CD4-positive, alpha-beta memory T cell (primary cell): ENCODE measurements at regions of chr21 and their contacts with region 1.

Region 1: DNA sequence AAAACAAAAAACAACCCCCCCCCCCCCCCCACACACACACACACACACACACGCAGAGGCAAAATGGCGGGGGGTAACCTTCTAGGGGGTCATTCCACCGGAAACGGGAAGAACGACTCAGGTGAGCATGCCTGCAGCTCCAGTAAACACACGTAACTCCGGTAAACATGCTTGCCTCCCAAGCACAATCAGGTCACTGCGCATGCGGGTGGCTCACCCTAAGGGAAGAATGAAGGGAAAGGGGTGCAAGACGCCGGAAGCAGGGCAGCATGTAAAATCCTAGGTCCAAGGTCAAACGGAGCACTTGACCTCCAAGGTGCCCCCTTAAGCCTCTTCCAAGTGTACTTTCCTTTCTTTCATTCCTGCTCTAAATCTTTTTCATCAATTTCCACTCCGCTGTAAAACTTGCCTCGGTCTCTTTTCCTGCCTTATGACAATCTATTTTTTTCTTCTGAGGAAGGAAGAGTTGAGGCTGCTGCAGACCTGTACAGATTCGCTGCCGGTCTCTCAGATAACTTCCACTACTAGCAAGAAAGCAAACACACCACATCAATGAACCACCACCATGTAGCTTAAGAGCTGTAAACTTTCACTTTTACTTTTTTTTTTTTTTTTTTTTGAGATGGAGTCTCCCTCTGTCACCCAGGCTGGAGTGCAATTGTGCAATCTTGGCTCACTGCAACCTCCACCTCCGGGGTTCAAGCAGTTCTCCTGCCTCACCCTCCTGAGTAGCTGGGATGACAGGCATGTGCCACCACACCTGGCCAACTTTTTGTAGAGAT is 21.0 kb upstream of the CBR3 start:
- DNase-seq: peak in 4 of 5 donors; percentile 56 to 85 (median 68)
- H3K4me3 ChIP-seq: peak overlapping the region; percentile 63 to 80
- H3K4me3 Mint-ChIP-seq: peak overlapping the region; percentile 81 to 98 (median 92)
- H3K27ac ChIP-seq: peak overlapping the region; percentile 49
- H3K27ac Mint-ChIP-seq: peak overlapping the region; percentile 45 to 97 (median 90)
- H3K4me1 ChIP-seq: peaks cover 29% of the 10 kb centered on the region
- H3K4me1 Mint-ChIP-seq: peaks cover 17 to 33% (median 21%) of the 10 kb centered on the region in 4 donors
- H3K27me3 ChIP-seq: no peaks in the 10 kb centered on the region
- H3K27me3 Mint-ChIP-seq: peaks cover 2% of the 10 kb centered on the region in 2 donors

Region 2: DNA sequence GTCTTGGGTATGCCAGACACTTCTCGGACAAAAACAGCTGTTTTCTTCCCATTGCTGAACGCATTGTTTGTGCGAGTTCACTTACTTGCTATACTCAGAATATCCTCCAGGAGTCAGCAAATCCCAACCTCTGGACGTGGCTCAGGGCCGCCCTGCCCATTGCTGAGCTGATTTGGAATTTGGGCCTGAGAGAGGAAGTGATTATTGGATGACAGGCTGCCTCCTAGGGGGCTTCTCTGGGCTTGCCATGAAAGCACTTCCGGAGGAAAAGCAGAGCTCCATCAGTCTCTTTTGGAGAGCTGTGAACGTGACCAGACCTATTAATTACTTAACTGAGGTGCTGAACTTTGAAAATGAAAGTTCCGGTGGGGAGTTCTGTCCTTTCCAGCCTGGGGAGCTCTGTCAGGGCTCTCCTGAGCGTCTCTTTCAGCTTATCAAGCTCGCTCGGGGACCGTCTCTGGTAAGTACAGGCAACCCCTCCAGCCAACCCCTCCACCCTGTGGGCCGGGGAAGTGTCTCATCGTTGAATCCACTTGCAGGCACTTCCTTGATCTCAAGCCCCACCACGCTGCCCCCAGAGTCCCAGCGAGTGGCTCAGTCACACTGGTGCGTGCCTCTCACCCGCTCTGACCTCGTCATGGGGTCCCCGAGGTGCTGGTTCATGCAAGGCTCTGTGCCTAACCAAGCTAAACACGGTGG is 1368.1 kb before region 1 on chr21:
- CTCF ChIA-PET with region 1: interaction called, 13 read pairs
- POLR2A ChIA-PET with region 1: no interaction called
- intact Hi-C with region 1: loop called (anchors 2 kb)
- DNase-seq: peak; percentile 43 to 63 (median 53)
- H3K4me3 ChIP-seq: no peak overlapping the region
- H3K4me3 Mint-ChIP-seq: peak overlapping the region in 3 of 8 donors; percentile 17 to 55 (median 50)
- H3K27ac ChIP-seq: no peak overlapping the region
- H3K27ac Mint-ChIP-seq: no peak overlapping the region
- H3K4me1 ChIP-seq: peaks cover 8% of the 10 kb centered on the region
- H3K4me1 Mint-ChIP-seq: peaks cover 0 to 4% (median 2%) of the 10 kb centered on the region in 4 donors
- H3K27me3 ChIP-seq: no peaks in the 10 kb centered on the region
- H3K27me3 Mint-ChIP-seq: peaks cover 7 to 8% of the 10 kb centered on the region in 2 donors

Region 3: GRCh38 chr21:35768187-35768586 is 345.7 kb before region 1 on chr21:
- CTCF ChIA-PET with region 1: no interaction called
- POLR2A ChIA-PET with region 1: no interaction called
- intact Hi-C with region 1: no loop called
- DNase-seq: no peak
- H3K4me3 ChIP-seq: no peak overlapping the region
- H3K4me3 Mint-ChIP-seq: no peak overlapping the region
- H3K27ac ChIP-seq: no peak overlapping the region
- H3K27ac Mint-ChIP-seq: no peak overlapping the region
- H3K4me1 ChIP-seq: no peaks in the 10 kb centered on the region
- H3K4me1 Mint-ChIP-seq: no peaks in the 10 kb centered on the region
- H3K27me3 ChIP-seq: no peaks in the 10 kb centered on the region
- H3K27me3 Mint-ChIP-seq: peaks cover 5 to 8% of the 10 kb centered on the region in 2 donors

Region 4: GRCh38 chr21:35840197-35840799 is 273.5 kb before region 1 on chr21:
- CTCF ChIA-PET with region 1: no interaction called
- POLR2A ChIA-PET with region 1: no interaction called
- intact Hi-C with region 1: loop called (anchors 5 kb)
- DNase-seq: peak; percentile 43 to 53 (median 44)
- H3K4me3 ChIP-seq: no peak overlapping the region
- H3K4me3 Mint-ChIP-seq: no peak overlapping the region
- H3K27ac ChIP-seq: no peak overlapping the region
- H3K27ac Mint-ChIP-seq: no peak overlapping the region
- H3K4me1 ChIP-seq: no peaks in the 10 kb centered on the region
- H3K4me1 Mint-ChIP-seq: no peaks in the 10 kb centered on the region
- H3K27me3 ChIP-seq: no peaks in the 10 kb centered on the region
- H3K27me3 Mint-ChIP-seq: peaks cover 0 to 6% of the 10 kb centered on the region in 2 donors

Region 5: GRCh38 chr21:35932232-35932911 is 181.5 kb before region 1 on chr21:
- CTCF ChIA-PET with region 1: no interaction called
- POLR2A ChIA-PET with region 1: no interaction called
- intact Hi-C with region 1: no loop called
- DNase-seq: peak in 1 of 5 donors; percentile 5
- H3K4me3 ChIP-seq: no peak overlapping the region
- H3K4me3 Mint-ChIP-seq: no peak overlapping the region
- H3K27ac ChIP-seq: no peak overlapping the region
- H3K27ac Mint-ChIP-seq: no peak overlapping the region
- H3K4me1 ChIP-seq: no peaks in the 10 kb centered on the region
- H3K4me1 Mint-ChIP-seq: no peaks in the 10 kb centered on the region
- H3K27me3 ChIP-seq: no peaks in the 10 kb centered on the region
- H3K27me3 Mint-ChIP-seq: peaks cover 2% of the 10 kb centered on the region in 2 donors

Region 6: GRCh38 chr21:36060159-36060921 is 53.5 kb before region 1 on chr21 and contains the start of gene SETD4:
- CTCF ChIA-PET with region 1: interaction called, 10 read pairs
- POLR2A ChIA-PET with region 1: interaction called, 29 read pairs
- intact Hi-C with region 1: loop called (anchors 1 kb)
- DNase-seq: peak; percentile 91 to 95 (median 93)
- H3K4me3 ChIP-seq: peak within 1 kb of the TSS; percentile 94 to 98
- H3K4me3 Mint-ChIP-seq: peak within 1 kb of the TSS; percentile 93 to 99 (median 96)
- H3K27ac ChIP-seq: peak within 1 kb of the TSS; percentile 83
- H3K27ac Mint-ChIP-seq: peak within 1 kb of the TSS; percentile 98 to 99 (median 98)
- H3K4me1 ChIP-seq: peaks cover 13% of the 10 kb centered on the region
- H3K4me1 Mint-ChIP-seq: peaks cover 6 to 34% (median 14%) of the 10 kb centered on the region in 4 donors
- H3K27me3 ChIP-seq: no peaks in the 10 kb centered on the region
- H3K27me3 Mint-ChIP-seq: no peaks in the 10 kb centered on the region
- total RNA-seq, gene SETD4: 30.3 to 31.0 TPM

Region 7: GRCh38 chr21:36125512-36126222 is 11.8 kb after region 1 on chr21:
- CTCF ChIA-PET with region 1: interaction called, 27 read pairs
- POLR2A ChIA-PET with region 1: interaction called, 12 read pairs
- intact Hi-C with region 1: no loop called
- DNase-seq: peak; percentile 40 to 57 (median 46)
- H3K4me3 ChIP-seq: no peak overlapping the region
- H3K4me3 Mint-ChIP-seq: no peak overlapping the region
- H3K27ac ChIP-seq: no peak overlapping the region
- H3K27ac Mint-ChIP-seq: no peak overlapping the region
- H3K4me1 ChIP-seq: peaks cover 3% of the 10 kb centered on the region
- H3K4me1 Mint-ChIP-seq: peaks cover 13 to 24% (median 19%) of the 10 kb centered on the region in 4 donors
- H3K27me3 ChIP-seq: no peaks in the 10 kb centered on the region
- H3K27me3 Mint-ChIP-seq: no peaks in the 10 kb centered on the region